ENCODE measurements at regions of chr15 and their contacts with region 1.

Region 1: GRCh38 chr15:100905850-100906249 is 13.3 kb upstream of the LRRK1 start:
- DNase-seq: no peak
- ATAC-seq: no peak
- H3K4me3 ChIP-seq: no peak overlapping the region
- H3K4me3 Mint-ChIP-seq: no peak overlapping the region
- H3K27ac ChIP-seq: no peak overlapping the region
- H3K27ac Mint-ChIP-seq: no peak overlapping the region
- H3K4me1 ChIP-seq: no peaks in the 10 kb centered on the region
- H3K4me1 Mint-ChIP-seq: no peaks in the 10 kb centered on the region
- H3K27me3 ChIP-seq: peaks cover 0 to 4% of the 10 kb centered on the region in 2 experiments
- H3K27me3 Mint-ChIP-seq: peaks cover 7% of the 10 kb centered on the region
- CTCF ChIP-seq: no peak

Region 2: DNA sequence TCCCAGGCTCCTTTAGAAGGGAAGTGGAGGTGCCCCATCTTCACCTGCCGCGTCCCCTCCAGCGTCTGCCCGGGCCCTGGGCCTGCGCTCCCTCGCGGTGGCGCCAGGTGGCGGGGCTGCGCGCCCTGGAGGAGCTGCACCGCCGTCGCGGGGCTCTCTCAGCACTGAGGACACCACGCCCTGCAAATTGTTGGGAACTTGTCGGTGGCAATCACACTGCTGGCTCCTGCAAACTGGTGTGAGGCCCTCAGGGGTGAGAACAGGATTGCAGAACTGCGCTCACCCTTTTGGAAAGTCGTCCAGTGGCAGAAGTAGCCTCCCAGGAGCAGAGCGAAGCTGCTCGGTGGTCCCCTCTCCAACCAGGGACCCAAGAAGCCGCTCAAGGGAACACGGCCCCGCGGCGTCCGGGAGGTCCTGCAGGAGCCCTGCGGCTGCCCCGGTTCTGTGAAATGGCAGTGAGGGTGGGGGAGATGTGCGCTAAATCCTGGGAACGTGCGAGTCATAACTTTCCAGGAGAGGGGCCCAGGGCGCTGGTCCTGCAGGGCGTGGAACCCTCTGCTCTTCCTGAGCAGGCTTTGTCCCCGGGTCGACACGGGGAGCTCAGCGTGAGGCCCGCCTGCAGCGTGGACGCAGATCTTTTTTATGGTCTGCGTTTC is 12.3 kb after region 1 on chr15:
- CTCF ChIA-PET with region 1: interaction called, 12 read pairs
- POLR2A ChIA-PET with region 1: interaction called, 4 read pairs
- intact Hi-C with region 1: no loop called
- DNase-seq: peak; percentile 24 to 72 (median 56)
- ATAC-seq: peak; percentile 95
- H3K4me3 ChIP-seq: peak overlapping the region; percentile 33 to 67
- H3K4me3 Mint-ChIP-seq: peak overlapping the region; percentile 83
- H3K27ac ChIP-seq: no peak overlapping the region
- H3K27ac Mint-ChIP-seq: no peak overlapping the region
- H3K4me1 ChIP-seq: peaks cover 8% of the 10 kb centered on the region
- H3K4me1 Mint-ChIP-seq: peaks cover 18% of the 10 kb centered on the region
- H3K27me3 ChIP-seq: peaks cover 0 to 14% of the 10 kb centered on the region in 2 experiments
- H3K27me3 Mint-ChIP-seq: peaks cover 66% of the 10 kb centered on the region
- CTCF ChIP-seq: peak; percentile 71

Measured in CD8-positive, alpha-beta T cell (primary cell).